Mammary epithelial cell (primary cell): ENCODE measurements at regions of chr19 and their contacts with region 1.

Region 1: GRCh38 chr19:4909897-4910593 is 744 bp downstream of the UHRF1 start:
- DNase-seq: peak; percentile 89
- H3K4me3 ChIP-seq: peak overlapping the region; percentile 57 to 71 (median 64)
- H3K27ac ChIP-seq: peak overlapping the region; percentile 76
- H3K4me1 ChIP-seq: peaks cover 48% of the 10 kb centered on the region
- H3K27me3 ChIP-seq: no peaks in the 10 kb centered on the region
- CTCF ChIP-seq: no peak

Region 2: GRCh38 chr19:4732680-4733114 is 177.3 kb before region 1 on chr19:
- CTCF ChIA-PET with region 1: interaction called, 4 read pairs
- dilution Hi-C with region 1: no loop called
- in situ Hi-C with region 1: no loop called
- intact Hi-C with region 1: loop called (anchors 2 kb)
- DNase-seq: peak; percentile 43
- H3K4me3 ChIP-seq: no peak overlapping the region
- H3K27ac ChIP-seq: no peak overlapping the region
- H3K4me1 ChIP-seq: no peaks in the 10 kb centered on the region
- H3K27me3 ChIP-seq: peaks cover 2% of the 10 kb centered on the region
- CTCF ChIP-seq: peak; percentile 56 to 86

Region 3: DNA sequence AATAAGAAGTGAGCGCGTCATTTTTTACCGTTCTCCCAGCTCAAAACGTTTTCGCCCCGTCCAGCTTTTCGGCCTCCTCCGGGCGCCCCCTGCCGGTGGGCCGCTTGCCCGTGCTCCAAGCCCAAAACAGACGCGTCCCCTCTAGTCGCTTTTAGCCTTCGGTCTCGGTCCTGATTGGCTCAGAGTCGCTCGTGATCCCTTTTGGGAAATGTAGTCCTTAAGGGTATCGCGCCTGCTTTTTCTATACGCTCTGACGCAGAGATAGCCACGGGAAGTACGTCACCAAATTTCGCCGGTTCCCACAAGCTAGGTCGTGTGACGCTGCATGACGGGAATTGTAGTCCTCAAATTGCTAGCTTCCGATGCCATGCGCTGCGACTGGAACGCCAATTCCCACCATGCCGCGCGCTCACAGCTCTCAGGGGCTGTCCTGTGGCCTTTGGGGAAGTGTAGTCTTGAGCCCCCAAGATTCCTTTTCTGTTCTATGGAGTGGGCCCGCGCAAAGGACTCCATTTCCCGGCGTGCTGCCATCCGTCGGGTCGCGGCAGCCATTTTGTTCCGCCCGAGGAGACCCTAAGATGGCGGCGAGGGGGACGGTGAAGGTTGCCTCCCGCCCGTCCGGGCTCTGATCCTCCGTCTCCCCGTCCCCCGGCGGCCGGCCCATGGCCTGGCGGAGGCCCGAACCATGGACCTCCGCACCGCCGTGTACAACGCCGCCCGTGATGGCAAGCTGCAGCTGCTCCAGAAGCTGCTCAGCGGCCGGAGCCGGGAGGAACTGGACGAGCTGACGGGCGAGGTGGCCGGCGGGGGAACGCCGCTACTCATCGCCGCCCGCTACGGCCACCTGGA is 118.7 kb before region 1 on chr19 and contains the start of gene FEM1A:
- CTCF ChIA-PET with region 1: no interaction called
- dilution Hi-C with region 1: no loop called
- in situ Hi-C with region 1: no loop called
- intact Hi-C with region 1: no loop called
- DNase-seq: peak; percentile 100
- H3K4me3 ChIP-seq: peak within 1 kb of the TSS; percentile 68 to 89 (median 77)
- H3K27ac ChIP-seq: peak within 1 kb of the TSS; percentile 78
- H3K4me1 ChIP-seq: peaks cover 39% of the 10 kb centered on the region
- H3K27me3 ChIP-seq: no peaks in the 10 kb centered on the region
- CTCF ChIP-seq: peak; percentile 98 to 99
- total RNA-seq, gene FEM1A: 12.8 to 17.5 TPM

Region 4: GRCh38 chr19:4867534-4868285 is 42.3 kb before region 1 on chr19 and contains the start of gene PLIN3:
- CTCF ChIA-PET with region 1: interaction called, 5 read pairs
- dilution Hi-C with region 1: loop called (anchors 5 kb)
- in situ Hi-C with region 1: loop called (anchors 5 kb)
- intact Hi-C with region 1: loop called (anchors 1 kb)
- DNase-seq: peak; percentile 92
- H3K4me3 ChIP-seq: peak within 1 kb of the TSS; percentile 74 to 100 (median 80)
- H3K27ac ChIP-seq: peak within 1 kb of the TSS; percentile 61
- H3K4me1 ChIP-seq: peaks cover 14% of the 10 kb centered on the region
- H3K27me3 ChIP-seq: no peaks in the 10 kb centered on the region
- CTCF ChIP-seq: no peak
- total RNA-seq, gene PLIN3: 89.4 to 147 TPM

Region 5: DNA sequence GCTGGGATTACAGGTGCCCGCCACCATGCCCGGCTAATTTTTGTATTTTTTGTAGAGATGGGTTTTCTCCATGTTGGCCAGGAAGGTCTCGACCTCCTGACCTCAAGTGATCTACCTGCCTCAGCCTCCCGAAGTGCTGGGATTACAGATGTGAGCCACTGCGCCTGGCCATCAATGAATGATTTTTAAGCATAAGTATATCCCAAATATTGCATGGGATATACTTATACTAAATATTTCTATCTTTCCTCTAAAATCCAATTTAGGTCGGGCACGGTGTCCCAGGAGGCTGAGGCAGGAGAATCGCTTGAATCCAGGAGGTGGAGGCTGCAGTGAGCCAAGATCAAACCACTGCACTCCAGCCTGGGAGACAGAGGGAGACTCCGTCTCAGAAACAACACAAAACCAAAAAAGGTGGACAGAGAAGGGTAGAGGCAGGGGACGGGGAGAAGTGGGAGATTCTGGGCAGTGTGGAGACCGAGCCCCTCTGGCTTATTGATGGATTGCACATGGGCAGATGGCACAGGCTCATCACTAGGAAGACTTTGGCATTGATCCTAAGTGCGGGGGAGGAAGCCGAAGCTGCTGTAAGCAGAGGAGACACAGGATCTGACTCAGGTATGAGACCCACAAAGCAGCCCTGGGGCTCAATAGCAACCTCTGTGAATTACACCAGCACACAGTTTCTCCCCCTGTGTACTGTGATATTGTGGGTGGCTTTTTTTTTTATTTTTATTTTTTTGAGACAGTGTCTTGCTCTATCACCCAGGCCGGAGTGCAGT is 20.8 kb before region 1 on chr19:
- CTCF ChIA-PET with region 1: no interaction called
- dilution Hi-C with region 1: no loop called
- in situ Hi-C with region 1: no loop called
- intact Hi-C with region 1: loop called (anchors 2 kb)
- DNase-seq: peak; percentile 95
- H3K4me3 ChIP-seq: no peak overlapping the region
- H3K27ac ChIP-seq: no peak overlapping the region
- H3K4me1 ChIP-seq: peaks cover 3% of the 10 kb centered on the region
- H3K27me3 ChIP-seq: no peaks in the 10 kb centered on the region
- CTCF ChIP-seq: no peak

Region 6: DNA sequence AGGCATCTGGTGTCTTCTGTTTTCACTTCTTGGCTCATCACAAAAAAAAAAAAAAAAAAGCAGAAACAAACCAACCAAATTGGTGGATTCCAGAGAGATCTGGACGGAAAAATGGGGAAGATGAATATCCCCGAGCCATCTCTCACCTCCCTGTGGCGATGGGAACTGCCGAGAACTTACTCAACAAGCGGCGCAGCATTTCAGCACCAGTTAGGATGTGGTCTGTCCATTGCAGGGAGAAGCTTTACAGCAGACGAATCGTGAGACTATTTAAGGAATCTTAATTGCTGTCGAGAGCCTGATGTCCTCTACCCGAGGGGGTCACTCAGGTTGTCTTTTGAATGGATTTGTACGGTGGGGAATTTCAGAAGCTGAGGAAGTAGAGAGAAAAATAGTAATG is 41.6 kb after region 1 on chr19:
- CTCF ChIA-PET with region 1: no interaction called
- dilution Hi-C with region 1: loop called (anchors 5 kb)
- in situ Hi-C with region 1: no loop called
- intact Hi-C with region 1: no loop called
- DNase-seq: no peak
- H3K4me3 ChIP-seq: no peak overlapping the region
- H3K27ac ChIP-seq: no peak overlapping the region
- H3K4me1 ChIP-seq: no peaks in the 10 kb centered on the region
- H3K27me3 ChIP-seq: no peaks in the 10 kb centered on the region
- CTCF ChIP-seq: no peak

Region 7: DNA sequence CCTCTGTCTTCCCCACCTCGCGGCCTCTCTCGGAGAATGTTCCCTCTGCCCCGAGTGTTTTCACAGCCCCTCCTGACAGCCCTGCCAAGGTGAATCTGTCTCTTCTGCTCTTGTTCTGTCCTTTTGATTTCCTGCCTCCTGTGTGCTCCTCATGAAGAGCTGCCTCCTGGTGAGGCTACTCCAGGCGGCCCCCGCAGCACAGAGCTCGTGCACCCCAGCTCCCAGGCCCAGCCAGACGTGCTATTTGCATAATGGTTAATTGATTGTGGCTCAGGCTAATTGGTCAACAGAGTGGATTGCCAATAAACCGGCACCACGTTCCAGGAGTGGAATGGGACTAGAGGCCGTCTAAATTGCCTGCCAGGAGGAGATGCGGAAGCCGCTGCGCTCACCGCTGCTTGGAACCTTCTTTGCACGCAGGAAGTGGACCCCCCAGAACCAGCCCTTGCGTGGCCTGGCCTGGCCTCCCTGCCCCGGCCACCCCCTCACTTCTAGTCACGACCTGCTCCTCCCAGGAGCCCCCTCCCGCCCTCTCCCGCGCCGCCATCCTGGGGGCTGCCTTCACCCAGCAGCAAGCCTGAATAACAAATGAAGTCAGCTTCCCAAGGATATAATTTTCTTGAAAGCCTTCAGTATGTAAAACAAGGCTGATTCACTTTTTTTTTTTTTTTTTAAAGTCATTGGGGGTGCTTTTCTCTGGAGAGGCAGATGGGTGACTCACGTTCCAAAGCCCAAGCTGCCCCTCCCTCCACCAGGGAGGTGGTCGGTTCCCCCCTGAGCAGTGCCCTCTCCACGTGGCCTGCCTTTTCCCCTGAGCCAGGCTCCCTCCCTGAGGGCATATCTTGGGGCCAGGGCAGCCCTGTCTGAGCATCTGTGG is 202.9 kb after region 1 on chr19:
- CTCF ChIA-PET with region 1: no interaction called
- dilution Hi-C with region 1: no loop called
- in situ Hi-C with region 1: no loop called
- intact Hi-C with region 1: no loop called
- DNase-seq: no peak
- H3K4me3 ChIP-seq: no peak overlapping the region
- H3K27ac ChIP-seq: no peak overlapping the region
- H3K4me1 ChIP-seq: no peaks in the 10 kb centered on the region
- H3K27me3 ChIP-seq: no peaks in the 10 kb centered on the region
- CTCF ChIP-seq: no peak

Region 8: DNA sequence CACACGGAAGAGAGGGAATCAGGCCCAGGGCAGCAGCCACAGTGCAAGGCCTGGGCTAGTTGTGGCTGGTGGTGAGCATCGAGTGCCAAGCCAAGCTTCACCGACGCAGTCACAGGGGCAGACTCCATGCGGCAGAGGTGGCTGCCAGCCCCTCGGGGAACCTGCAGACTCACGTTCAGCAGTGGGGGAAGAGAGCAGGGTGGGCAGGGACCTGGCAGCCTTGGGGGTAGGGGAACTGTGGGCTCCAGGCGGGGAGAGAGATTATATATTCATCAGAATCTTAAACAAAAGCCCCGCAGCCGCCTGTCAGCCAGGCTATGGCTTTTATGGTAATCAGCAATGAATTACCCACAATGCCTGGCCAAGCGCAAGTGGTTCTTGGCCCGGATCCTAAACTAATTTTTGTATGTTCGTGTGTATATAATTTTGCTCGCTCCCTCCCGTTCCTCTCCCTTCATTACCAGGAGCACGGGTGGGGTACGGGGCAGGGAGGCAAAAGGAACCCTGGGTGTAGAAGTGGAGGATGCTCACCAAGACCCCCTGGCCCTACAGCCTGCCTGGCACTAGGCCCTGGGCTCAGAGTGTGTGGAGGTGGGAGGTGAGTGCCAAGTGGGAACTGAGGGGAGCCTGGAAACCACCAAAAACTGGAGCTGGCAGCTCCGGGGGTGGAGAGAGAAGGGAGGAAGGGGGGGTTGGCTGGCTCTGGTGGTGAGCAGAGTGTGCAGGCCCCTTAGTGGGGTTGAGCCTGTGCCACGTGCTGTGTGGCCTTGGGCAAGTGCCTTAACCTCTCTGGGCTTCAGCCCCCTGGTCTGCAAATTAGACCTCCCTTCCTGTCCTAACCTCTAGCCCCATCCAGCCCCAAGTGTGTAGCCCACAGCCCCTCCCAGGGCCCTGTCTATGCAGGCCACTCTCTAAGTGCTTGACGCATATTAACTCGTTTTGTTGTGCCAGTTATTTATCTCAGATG is 398.7 kb after region 1 on chr19:
- CTCF ChIA-PET with region 1: no interaction called
- dilution Hi-C with region 1: no loop called
- in situ Hi-C with region 1: no loop called
- intact Hi-C with region 1: no loop called
- DNase-seq: peak; percentile 87
- H3K4me3 ChIP-seq: peak overlapping the region in 1 of 3 experiments; percentile 37
- H3K27ac ChIP-seq: peak overlapping the region; percentile 84
- H3K4me1 ChIP-seq: peaks cover 15% of the 10 kb centered on the region
- H3K27me3 ChIP-seq: no peaks in the 10 kb centered on the region
- CTCF ChIP-seq: no peak